ENCODE measurements at regions of chr1 and their contacts with region 1.

Region 1: DNA sequence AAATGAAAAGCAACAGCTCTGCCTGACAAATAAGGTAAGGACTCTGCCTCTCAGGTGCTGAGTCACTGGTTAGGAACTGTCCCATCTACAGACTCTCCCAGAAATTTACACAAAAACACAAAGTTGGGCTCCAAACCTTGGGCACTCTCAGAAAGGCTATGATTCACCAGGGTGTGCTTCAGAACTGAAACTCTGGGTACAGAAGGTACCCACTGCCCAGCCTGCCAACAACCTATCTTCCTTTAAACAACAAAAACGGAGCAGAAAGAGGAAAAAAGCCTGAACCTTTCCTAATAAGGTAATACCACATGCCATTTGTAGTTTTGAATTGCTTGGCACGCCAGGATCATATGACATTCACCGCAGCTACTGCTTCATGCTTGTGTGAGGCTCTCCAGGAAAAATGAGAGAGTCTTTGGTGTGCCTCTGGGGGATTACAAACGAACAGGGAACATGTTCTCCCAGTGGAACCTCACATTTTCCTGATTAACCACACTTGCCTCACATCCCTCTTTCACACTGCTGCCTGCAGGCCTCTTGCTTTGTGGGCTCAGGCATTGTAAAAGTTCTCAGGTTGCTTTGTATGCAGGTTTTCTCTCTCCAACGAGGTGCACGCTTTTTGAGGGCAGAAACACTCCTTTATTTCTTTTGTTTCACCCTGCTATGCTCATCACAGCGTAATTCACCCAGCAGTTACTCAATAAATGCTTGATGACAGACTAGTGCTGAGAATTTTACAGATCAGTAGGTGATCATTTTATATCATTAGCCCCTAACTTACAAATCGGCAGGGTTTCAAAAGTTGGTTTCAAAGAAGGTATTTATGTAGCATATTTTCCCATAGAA is 65.1 kb downstream of the GADD45A start:
- DNase-seq: peak in 3 of 5 donors; percentile 40 to 69 (median 60)
- H3K4me3 ChIP-seq: no peak overlapping the region
- H3K27ac ChIP-seq: peak overlapping the region; percentile 79 to 91
- H3K4me1 ChIP-seq: peaks cover 0 to 47% (median 33%) of the 10 kb centered on the region in 3 donors
- H3K27me3 ChIP-seq: no peaks in the 10 kb centered on the region
- CTCF ChIP-seq: no peak

Region 2: GRCh38 chr1:67535474-67535873 is 214.6 kb before region 1 on chr1:
- intact Hi-C with region 1: loop called (anchors 10 kb)
- DNase-seq: peak; percentile 71 to 92 (median 78)
- H3K4me3 ChIP-seq: no peak overlapping the region
- H3K27ac ChIP-seq: peak overlapping the region; percentile 76 to 85
- H3K4me1 ChIP-seq: peaks cover 0 to 39% (median 17%) of the 10 kb centered on the region in 3 donors
- H3K27me3 ChIP-seq: no peaks in the 10 kb centered on the region
- CTCF ChIP-seq: peak; percentile 96

Region 3: GRCh38 chr1:67685067-67685557 is 65.0 kb before region 1 on chr1 and contains the start of gene GADD45A:
- intact Hi-C with region 1: loop called (anchors 10 kb)
- DNase-seq: peak; percentile 99 to 100 (median 99)
- H3K4me3 ChIP-seq: peak within 1 kb of the TSS; percentile 57 to 92 (median 83)
- H3K27ac ChIP-seq: peak within 1 kb of the TSS; percentile 97 to 98
- H3K4me1 ChIP-seq: peaks cover 3 to 10% (median 5%) of the 10 kb centered on the region in 3 donors
- H3K27me3 ChIP-seq: no peaks in the 10 kb centered on the region
- CTCF ChIP-seq: no peak
- total RNA-seq, gene GADD45A: 85.6 TPM

Region 4: DNA sequence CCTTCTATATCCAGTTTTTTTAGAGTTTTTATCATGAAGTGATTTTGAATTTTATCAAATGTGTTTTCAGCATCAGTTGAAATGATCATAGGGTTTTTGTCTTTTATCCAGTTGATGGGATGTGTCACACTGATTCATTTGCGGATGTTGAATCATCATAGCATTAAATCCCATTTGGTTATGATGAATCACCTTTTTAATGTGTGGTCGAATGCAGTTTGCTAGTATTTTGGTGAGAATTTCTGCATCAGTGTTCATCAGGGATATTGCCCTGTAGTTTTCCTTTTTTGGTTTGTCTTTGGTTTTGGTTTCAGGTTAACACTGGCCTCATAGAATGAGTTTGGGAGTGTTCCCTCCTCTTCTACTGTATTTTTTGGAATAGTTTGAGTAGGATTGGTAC is 220.0 kb after region 1 on chr1:
- intact Hi-C with region 1: no loop called
- DNase-seq: no peak
- H3K4me3 ChIP-seq: no peak overlapping the region
- H3K27ac ChIP-seq: no peak overlapping the region
- H3K4me1 ChIP-seq: no peaks in the 10 kb centered on the region
- H3K27me3 ChIP-seq: no peaks in the 10 kb centered on the region
- CTCF ChIP-seq: no peak